Lower lobe of right lung (tissue), 2 donors: ENCODE measurements at regions of chr1 and their contacts with region 1.

Region 1: DNA sequence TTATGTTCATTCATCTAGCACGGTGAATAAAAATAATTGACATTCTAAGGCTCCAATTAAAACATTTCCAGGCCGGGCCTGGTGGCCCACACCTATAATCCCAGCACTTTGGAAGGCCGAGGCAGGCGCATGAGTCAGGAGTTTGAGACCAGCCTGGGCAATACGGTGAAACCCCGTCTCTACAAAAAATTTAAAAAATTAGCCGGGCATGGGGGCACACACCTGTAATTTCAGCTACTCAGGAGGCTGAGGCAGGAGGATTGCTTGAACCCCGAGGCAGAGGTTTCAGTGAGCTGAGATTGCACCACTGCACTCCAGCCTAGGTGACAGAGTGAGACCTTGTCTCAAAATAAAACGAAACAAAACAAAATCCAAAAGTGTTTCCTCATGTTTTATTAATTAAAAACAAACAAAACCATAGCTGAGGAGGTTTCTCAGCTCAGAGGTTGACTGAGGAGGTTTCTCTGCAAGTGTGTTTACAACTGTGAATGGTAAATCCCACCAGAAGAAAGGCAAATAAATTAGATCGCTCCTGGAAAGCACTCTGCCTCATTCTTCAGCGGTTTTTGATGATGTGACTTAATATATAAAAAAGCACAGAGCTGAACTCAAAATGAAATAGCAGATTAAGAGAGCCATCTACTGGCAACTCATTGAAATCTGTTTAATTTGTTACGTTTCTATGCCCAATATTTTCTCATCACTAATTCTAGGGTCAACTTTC is 37.7 kb upstream of the ATG4C start:
- DNase-seq: no peak
- ATAC-seq: peak in 1 of 2 donors; percentile 56
- H3K4me3 ChIP-seq: peak overlapping the region; percentile 9
- H3K27ac ChIP-seq: no peak overlapping the region
- H3K4me1 ChIP-seq: no peaks in the 10 kb centered on the region
- H3K27me3 ChIP-seq: no peaks in the 10 kb centered on the region
- CTCF ChIP-seq: peak; percentile 60

Region 2: GRCh38 chr1:62508187-62508758 is 238.0 kb before region 1 on chr1:
- intact Hi-C with region 1: loop called (anchors 10 kb)
- DNase-seq: no peak
- ATAC-seq: no peak
- H3K4me3 ChIP-seq: no peak overlapping the region
- H3K27ac ChIP-seq: no peak overlapping the region
- H3K4me1 ChIP-seq: no peaks in the 10 kb centered on the region
- H3K27me3 ChIP-seq: no peaks in the 10 kb centered on the region
- CTCF ChIP-seq: peak; percentile 49

Region 3: GRCh38 chr1:62643283-62643682 is 103.0 kb before region 1 on chr1:
- intact Hi-C with region 1: loop called (anchors 10 kb)
- DNase-seq: no peak
- ATAC-seq: no peak
- H3K4me3 ChIP-seq: no peak overlapping the region
- H3K27ac ChIP-seq: no peak overlapping the region
- H3K4me1 ChIP-seq: no peaks in the 10 kb centered on the region
- H3K27me3 ChIP-seq: no peaks in the 10 kb centered on the region
- CTCF ChIP-seq: no peak

Region 4: DNA sequence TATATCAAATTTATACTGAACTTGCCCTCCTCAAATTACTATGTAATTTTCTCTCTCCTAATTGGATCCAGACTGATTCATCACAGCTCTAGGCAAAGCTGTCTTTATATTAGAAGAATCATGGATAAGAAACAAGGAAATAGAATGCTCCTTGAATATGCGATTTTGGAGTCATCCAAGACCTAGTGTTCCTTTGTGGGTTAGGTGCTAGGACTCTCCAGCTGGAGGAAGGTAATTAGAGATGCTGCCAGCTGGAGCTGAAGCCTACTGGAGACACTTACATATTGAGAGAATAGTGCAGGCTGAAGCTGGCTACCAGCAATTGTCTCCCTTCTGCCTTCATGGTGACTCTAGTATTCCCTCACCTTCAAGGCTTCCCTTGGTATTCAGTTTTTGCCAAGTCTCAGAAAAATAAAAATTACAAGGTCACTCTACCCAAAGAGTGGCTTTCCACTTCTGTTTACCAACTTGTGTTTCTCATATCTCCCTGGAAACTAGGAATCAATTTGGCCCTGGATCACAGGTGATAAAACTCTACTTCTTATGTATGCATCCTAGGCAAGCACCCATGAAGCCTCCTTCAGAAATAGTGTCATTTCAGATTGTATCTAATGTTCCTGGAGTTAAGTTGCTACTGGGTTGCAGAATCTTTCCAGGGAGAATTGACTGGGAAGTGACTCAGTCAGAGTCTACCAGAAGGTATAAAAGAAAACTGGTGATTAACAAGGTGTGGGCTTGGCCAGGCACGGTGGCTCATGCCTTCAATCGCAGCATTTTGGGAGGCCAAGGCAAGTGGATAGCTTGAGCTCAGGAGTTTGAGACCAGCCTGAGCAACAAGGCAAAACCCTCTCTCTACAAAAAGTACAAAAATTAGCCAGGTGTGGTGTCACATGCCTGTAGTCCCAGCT is 33.7 kb before region 1 on chr1:
- intact Hi-C with region 1: no loop called
- DNase-seq: no peak
- ATAC-seq: no peak
- H3K4me3 ChIP-seq: no peak overlapping the region
- H3K27ac ChIP-seq: no peak overlapping the region
- H3K4me1 ChIP-seq: peaks cover 6% of the 10 kb centered on the region
- H3K27me3 ChIP-seq: no peaks in the 10 kb centered on the region
- CTCF ChIP-seq: no peak